RWPE1 (cell line): ENCODE measurements at regions of chr10 and their contacts with region 1.

Region 1: DNA sequence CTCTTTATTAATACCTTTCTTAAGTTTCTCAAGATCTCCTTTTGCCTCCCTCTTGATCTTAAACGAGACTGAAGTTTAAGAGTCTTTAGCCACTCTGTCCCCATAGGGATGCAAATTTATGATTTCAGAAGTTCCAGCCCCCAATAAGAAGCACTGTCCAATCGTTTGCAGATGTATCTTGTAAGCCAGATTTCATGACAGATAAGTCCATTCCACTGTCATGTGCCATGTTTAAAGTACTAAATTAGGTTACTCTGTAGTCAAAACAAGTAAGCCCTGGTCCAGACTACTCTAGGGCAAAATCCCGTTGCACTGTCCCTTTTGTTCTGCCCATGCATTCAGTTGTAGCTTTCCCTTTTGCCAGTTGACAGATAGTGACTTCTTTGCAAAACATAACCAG is 157.2 kb upstream of the KAT6B start:
- DNase-seq: no peak
- H3K27ac ChIP-seq: no peak overlapping the region
- CTCF ChIP-seq: no peak

Region 2: GRCh38 chr10:74690393-74690792 is 21.2 kb after region 1 on chr10:
- CTCF ChIA-PET with region 1: interaction called, 14 read pairs
- POLR2A ChIA-PET with region 1: no interaction called
- DNase-seq: no peak
- H3K27ac ChIP-seq: no peak overlapping the region
- CTCF ChIP-seq: no peak